ENCODE measurements at regions of chr11 and their contacts with region 1.

Region 1: GRCh38 chr11:130390071-130390758 is 38.2 kb downstream of the ADAMTS8 start:
- DNase-seq: no peak
- ATAC-seq: peak; percentile 74 to 75

Region 2: GRCh38 chr11:130427581-130428315 is 37.5 kb after region 1 on chr11:
- intact Hi-C with region 1: loop called in 1 of 2 experiments (anchors 2 kb)
- DNase-seq: peak; percentile 41
- ATAC-seq: peak; percentile 22 to 28